ENCODE measurements at regions of chr12 and their contacts with region 1.

Region 1: GRCh38 chr12:56636675-56637540 is 6.8 kb upstream of the BAZ2A start:
- DNase-seq: peak; percentile 100
- H3K4me3 ChIP-seq: peak overlapping the region; percentile 81
- H3K27ac ChIP-seq: peak overlapping the region; percentile 87
- H3K27me3 ChIP-seq: no peaks in the 10 kb centered on the region
- CTCF ChIP-seq: peak; percentile 72

Region 2: DNA sequence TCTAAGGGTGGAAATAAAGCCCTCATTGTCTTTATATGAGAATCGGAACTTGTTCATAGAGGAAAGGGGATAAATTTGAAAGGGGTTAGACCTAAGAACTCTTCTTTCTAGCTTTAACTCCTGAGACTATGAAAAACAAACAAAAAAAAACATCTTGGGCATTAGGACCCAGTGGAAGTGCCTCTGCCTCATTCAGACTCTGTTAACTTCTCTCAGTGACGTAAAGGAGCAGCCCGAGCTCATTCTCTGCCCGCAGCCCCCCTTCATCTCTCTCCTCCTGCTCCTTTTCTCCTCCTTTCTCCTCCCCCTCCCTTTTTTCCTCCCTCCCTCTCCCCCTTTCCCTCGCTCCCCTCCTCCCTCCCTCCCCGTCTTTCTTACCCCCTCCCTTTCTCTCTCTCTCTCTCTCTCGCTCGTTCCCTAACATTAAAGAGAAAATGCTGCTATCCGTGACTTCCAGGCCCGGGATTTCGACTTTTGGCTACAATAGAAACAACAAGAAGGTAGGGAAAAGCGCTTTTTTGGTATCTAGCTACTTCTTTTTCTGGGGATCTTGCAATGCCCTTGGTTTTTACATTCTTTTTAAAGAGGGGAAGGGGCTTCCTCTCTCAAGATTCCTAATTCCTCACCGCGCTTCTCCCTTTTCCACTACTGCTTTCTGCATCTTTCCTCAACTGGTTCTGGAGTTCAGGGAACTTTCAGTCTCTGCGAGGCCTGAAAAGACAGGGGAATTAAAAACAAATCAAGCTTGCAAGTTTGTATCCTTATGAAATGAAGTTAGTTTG is 115.1 kb before region 1 on chr12 and contains the start of gene RBMS2:
- CTCF ChIA-PET with region 1: interaction called, 25 read pairs
- POLR2A ChIA-PET with region 1: interaction called, 10 read pairs
- DNase-seq: peak; percentile 83
- H3K4me3 ChIP-seq: peak within 1 kb of the TSS; percentile 82
- H3K27ac ChIP-seq: peak within 1 kb of the TSS; percentile 86
- H3K27me3 ChIP-seq: no peaks in the 10 kb centered on the region
- CTCF ChIP-seq: no peak
- polyA plus RNA-seq, gene RBMS2: 96.4 and 117 TPM in 2 replicates

Region 3: GRCh38 chr12:56616925-56617324 is 20.0 kb before region 1 on chr12:
- CTCF ChIA-PET with region 1: interaction called, 33 read pairs
- POLR2A ChIA-PET with region 1: no interaction called
- DNase-seq: no peak
- H3K4me3 ChIP-seq: no peak overlapping the region
- H3K27ac ChIP-seq: no peak overlapping the region
- H3K27me3 ChIP-seq: no peaks in the 10 kb centered on the region
- CTCF ChIP-seq: no peak

Region 4: GRCh38 chr12:56670836-56671235 is 33.9 kb after region 1 on chr12:
- CTCF ChIA-PET with region 1: interaction called, 17 read pairs
- POLR2A ChIA-PET with region 1: interaction called, 8 read pairs
- DNase-seq: no peak
- H3K4me3 ChIP-seq: no peak overlapping the region
- H3K27ac ChIP-seq: no peak overlapping the region
- H3K27me3 ChIP-seq: no peaks in the 10 kb centered on the region
- CTCF ChIP-seq: no peak

Region 5: DNA sequence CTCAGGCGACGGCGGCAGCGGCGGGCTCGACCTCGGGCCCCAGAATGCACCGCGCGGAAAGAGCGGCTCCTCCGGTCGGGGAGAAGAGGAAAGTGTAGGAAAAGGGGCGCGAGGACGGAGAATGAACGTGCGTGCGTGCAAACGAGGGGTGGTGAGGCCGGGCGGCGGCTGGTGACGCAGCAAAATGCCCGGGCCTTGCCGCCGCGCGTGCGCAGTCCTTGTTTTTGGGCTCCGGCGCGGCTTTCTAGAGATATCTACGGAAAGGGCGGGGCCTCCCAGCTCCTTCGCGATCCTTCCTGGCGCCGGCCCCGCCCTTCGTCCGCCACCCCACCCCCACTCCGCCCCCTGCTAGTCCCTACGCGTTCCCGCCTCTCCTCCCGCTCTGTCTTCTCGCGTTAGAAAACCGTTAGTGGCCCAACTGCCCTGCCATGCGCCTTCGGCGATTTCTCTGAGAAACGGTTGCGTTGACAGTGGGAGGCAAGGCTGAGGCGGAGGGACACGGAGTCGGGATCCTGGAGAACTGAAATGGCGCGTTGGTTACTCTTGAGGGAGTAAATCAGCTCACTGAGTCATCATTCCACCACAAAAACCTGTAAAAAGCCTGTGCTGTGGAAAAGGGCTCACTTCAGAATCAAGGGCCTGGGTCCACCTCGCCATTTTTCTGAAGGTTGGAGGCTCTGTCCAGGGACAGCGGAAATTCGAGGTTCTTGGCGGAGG is 51.4 kb after region 1 on chr12 and contains the start of gene PTGES3:
- CTCF ChIA-PET with region 1: interaction called, 16 read pairs
- POLR2A ChIA-PET with region 1: interaction called, 13 read pairs
- DNase-seq: peak; percentile 93
- H3K4me3 ChIP-seq: peak within 1 kb of the TSS; percentile 97
- H3K27ac ChIP-seq: peak within 1 kb of the TSS; percentile 99
- H3K27me3 ChIP-seq: no peaks in the 10 kb centered on the region
- CTCF ChIP-seq: no peak
- polyA plus RNA-seq, gene PTGES3: 80.1 and 112 TPM in 2 replicates

Region 6: GRCh38 chr12:56724972-56725722 is 88.2 kb after region 1 on chr12 and contains the start of gene NACA:
- CTCF ChIA-PET with region 1: interaction called, 14 read pairs
- POLR2A ChIA-PET with region 1: interaction called, 15 read pairs
- DNase-seq: peak; percentile 95
- H3K4me3 ChIP-seq: peak within 1 kb of the TSS; percentile 99
- H3K27ac ChIP-seq: peak within 1 kb of the TSS; percentile 91
- H3K27me3 ChIP-seq: no peaks in the 10 kb centered on the region
- CTCF ChIP-seq: no peak
- polyA plus RNA-seq, gene NACA: 596 and 723 TPM in 2 replicates

Region 7: GRCh38 chr12:56818629-56819028 is 181.7 kb after region 1 on chr12:
- CTCF ChIA-PET with region 1: no interaction called
- POLR2A ChIA-PET with region 1: no interaction called
- DNase-seq: no peak
- H3K4me3 ChIP-seq: no peak overlapping the region
- H3K27ac ChIP-seq: no peak overlapping the region
- H3K27me3 ChIP-seq: peaks cover 14% of the 10 kb centered on the region
- CTCF ChIP-seq: no peak

Measured in AG04450 (cell line).